ENCODE measurements at regions of chr10 and their contacts with region 1.

Region 1: DNA sequence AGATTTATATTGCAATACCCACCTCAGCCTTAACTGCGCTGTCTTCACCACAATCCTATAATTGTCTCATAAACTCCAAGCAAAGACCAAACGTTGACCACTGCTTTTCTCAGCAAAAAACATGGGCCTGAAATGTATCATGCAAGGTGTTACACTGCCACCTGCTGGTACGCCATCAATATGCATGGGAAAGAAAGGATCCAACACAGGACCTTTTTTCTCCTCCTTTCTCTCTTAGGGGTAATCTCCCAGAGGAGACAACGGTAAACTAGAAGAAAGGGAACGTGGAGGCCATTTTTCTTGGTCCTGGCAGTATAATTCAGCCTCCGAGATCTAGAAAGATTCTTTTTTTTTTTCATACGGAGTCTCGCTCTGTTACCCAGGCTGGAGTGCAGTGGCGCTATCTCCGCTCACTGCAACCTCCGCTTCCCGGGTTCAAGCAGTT is 79.1 kb upstream of the MPP7 start:
- DNase-seq: peak; percentile 89
- H3K4me3 ChIP-seq: no peak overlapping the region
- H3K27ac ChIP-seq: no peak overlapping the region
- H3K4me1 ChIP-seq: peaks cover 0 to 11% (median 6%) of the 10 kb centered on the region in 4 donors
- H3K27me3 ChIP-seq: no peaks in the 10 kb centered on the region
- CTCF ChIP-seq: peak; percentile 91 to 99 (median 98)
- EP300 ChIP-seq: no peak
- POLR2A ChIP-seq: no peak

Region 2: GRCh38 chr10:27558612-27559020 is 823.3 kb before region 1 on chr10:
- in situ Hi-C with region 1: loop called in 1 of 4 experiments (anchors 25 kb)
- intact Hi-C with region 1: no loop called
- DNase-seq: peak; percentile 58
- H3K4me3 ChIP-seq: no peak overlapping the region
- H3K27ac ChIP-seq: no peak overlapping the region
- H3K4me1 ChIP-seq: peaks cover 0 to 2% (median 0%) of the 10 kb centered on the region in 4 donors
- H3K27me3 ChIP-seq: no peaks in the 10 kb centered on the region
- CTCF ChIP-seq: peak; percentile 57 to 78 (median 74)
- EP300 ChIP-seq: no peak
- POLR2A ChIP-seq: no peak

Region 3: DNA sequence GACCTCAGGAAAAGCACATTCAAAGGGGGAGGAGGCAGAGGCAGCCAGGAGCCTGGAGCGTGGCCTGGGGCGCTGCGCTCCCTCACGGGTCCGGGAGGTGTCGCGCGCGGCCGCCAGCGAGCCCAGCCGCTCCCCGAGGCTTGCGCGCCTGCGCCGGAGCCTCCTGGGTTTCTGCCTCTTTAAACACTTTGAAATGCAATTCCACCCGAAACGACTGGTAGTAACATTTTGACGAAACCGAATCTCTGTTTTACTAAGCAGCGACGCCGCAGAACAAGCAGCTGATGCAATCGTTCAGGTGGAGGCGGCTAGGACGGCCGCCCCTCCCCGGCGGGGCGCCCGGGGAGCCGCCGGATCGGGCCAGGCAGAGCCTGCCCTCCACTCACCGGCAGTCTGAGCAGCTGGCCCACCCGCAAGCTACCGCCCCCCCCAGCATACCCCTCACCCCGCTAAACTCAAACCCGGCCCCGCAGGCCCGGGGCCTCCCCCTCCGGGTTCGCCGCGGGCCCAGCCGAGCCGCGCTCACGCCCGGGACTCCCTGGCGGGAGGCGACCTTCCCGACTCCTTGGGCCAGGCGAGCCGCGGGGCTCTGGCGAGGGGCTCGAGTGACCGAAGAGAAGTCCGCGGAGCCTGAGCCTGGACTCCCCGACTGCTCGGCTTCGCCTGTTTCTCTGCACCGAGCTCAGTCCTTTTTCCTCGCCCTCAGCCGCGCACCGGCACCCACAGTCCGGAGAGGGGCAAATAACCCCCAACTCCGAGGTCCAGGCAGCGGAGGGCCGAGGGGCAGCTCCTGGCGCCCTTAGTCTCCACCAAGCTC is 639.5 kb before region 1 on chr10:
- in situ Hi-C with region 1: loop called in 3 of 4 experiments (anchors 25 kb)
- intact Hi-C with region 1: no loop called
- DNase-seq: peak; percentile 81
- H3K4me3 ChIP-seq: peak overlapping the region; percentile 39 to 95 (median 60)
- H3K27ac ChIP-seq: peak overlapping the region; percentile 83 to 87 (median 85)
- H3K4me1 ChIP-seq: peaks cover 0 to 52% (median 43%) of the 10 kb centered on the region in 4 donors
- H3K27me3 ChIP-seq: peaks cover 85% of the 10 kb centered on the region
- CTCF ChIP-seq: peak; percentile 70 to 84 (median 77)
- EP300 ChIP-seq: no peak
- POLR2A ChIP-seq: no peak

Region 4: DNA sequence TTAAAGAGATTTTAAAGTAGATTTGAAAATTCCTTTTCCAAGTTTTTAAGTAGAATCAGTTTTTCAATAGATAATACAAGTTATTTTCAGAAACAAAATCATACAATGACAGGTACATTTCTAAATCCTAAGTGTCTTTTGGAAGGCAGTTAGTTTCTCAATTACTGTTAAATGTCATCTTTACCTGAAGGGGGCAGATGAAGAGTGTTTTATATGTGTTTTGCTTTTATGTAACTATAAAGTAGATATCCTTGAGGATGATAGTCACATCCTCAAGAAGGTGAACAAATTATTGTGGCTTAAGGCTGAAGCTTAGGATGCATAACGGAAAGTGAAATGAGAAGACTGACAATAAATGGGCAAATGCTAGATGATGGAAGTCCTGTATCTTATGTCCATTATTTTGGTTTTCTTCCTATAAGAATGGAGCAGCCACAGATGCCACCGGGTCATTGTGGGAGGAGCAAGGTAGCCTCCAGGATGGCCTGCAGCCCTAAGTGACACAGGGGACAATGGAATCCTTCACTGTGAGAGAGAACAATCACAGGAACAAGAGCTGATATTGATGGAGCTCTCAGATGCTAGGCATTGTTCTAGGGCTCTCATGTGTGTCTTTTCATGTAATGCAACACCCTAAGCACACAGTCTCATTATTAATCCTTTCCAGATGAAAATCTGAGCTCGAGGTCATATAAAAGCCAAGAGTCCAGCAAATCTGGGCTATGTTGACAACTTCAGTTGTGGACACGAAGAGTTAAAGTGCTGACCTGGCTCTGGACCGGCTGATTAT is 622.2 kb before region 1 on chr10:
- in situ Hi-C with region 1: loop called in 1 of 4 experiments (anchors 25 kb)
- intact Hi-C with region 1: no loop called
- DNase-seq: no peak
- H3K4me3 ChIP-seq: no peak overlapping the region
- H3K27ac ChIP-seq: no peak overlapping the region
- H3K4me1 ChIP-seq: no peaks in the 10 kb centered on the region
- H3K27me3 ChIP-seq: peaks cover 11% of the 10 kb centered on the region
- CTCF ChIP-seq: no peak
- EP300 ChIP-seq: no peak
- POLR2A ChIP-seq: no peak

Region 5: GRCh38 chr10:28151636-28152035 is 230.3 kb before region 1 on chr10:
- in situ Hi-C with region 1: no loop called
- intact Hi-C with region 1: no loop called
- DNase-seq: no peak
- H3K4me3 ChIP-seq: no peak overlapping the region
- H3K27ac ChIP-seq: no peak overlapping the region
- H3K4me1 ChIP-seq: no peaks in the 10 kb centered on the region
- H3K27me3 ChIP-seq: no peaks in the 10 kb centered on the region
- CTCF ChIP-seq: no peak
- EP300 ChIP-seq: no peak
- POLR2A ChIP-seq: no peak

Region 6: GRCh38 chr10:28250782-28251181 is 131.1 kb before region 1 on chr10:
- in situ Hi-C with region 1: loop called (anchors 5 to 10 kb)
- intact Hi-C with region 1: loop called (anchors 5 kb)
- DNase-seq: no peak
- H3K4me3 ChIP-seq: no peak overlapping the region
- H3K27ac ChIP-seq: peak overlapping the region in 1 of 4 donors; percentile 32
- H3K4me1 ChIP-seq: peaks cover 0 to 15% (median 0%) of the 10 kb centered on the region in 4 donors
- H3K27me3 ChIP-seq: no peaks in the 10 kb centered on the region
- CTCF ChIP-seq: peak; percentile 52 to 66 (median 59)
- EP300 ChIP-seq: no peak
- POLR2A ChIP-seq: no peak

Region 7: GRCh38 chr10:28256797-28257196 is 125.1 kb before region 1 on chr10:
- in situ Hi-C with region 1: loop called (anchors 5 to 10 kb)
- intact Hi-C with region 1: loop called (anchors 5 kb)
- DNase-seq: no peak
- H3K4me3 ChIP-seq: no peak overlapping the region
- H3K27ac ChIP-seq: no peak overlapping the region
- H3K4me1 ChIP-seq: peaks cover 0 to 12% (median 0%) of the 10 kb centered on the region in 4 donors
- H3K27me3 ChIP-seq: no peaks in the 10 kb centered on the region
- CTCF ChIP-seq: no peak
- EP300 ChIP-seq: no peak
- POLR2A ChIP-seq: no peak

Region 8: GRCh38 chr10:28302638-28303488 is 79.1 kb before region 1 on chr10 and contains the start of gene MPP7:
- in situ Hi-C with region 1: loop called in 1 of 4 experiments (anchors 5 kb)
- intact Hi-C with region 1: loop called (anchors 2 kb)
- DNase-seq: peak; percentile 95
- H3K4me3 ChIP-seq: peak within 1 kb of the TSS; percentile 63 to 98 (median 84)
- H3K27ac ChIP-seq: peak within 1 kb of the TSS; percentile 92 to 97 (median 96)
- H3K4me1 ChIP-seq: peaks cover 0 to 23% (median 15%) of the 10 kb centered on the region in 4 donors
- H3K27me3 ChIP-seq: peaks cover 3% of the 10 kb centered on the region
- CTCF ChIP-seq: peak; percentile 42 to 63 (median 55)
- EP300 ChIP-seq: no peak
- POLR2A ChIP-seq: peak; percentile 85
- total RNA-seq, gene MPP7: 13.1 to 44.8 (median 27.3) TPM

Region 9: DNA sequence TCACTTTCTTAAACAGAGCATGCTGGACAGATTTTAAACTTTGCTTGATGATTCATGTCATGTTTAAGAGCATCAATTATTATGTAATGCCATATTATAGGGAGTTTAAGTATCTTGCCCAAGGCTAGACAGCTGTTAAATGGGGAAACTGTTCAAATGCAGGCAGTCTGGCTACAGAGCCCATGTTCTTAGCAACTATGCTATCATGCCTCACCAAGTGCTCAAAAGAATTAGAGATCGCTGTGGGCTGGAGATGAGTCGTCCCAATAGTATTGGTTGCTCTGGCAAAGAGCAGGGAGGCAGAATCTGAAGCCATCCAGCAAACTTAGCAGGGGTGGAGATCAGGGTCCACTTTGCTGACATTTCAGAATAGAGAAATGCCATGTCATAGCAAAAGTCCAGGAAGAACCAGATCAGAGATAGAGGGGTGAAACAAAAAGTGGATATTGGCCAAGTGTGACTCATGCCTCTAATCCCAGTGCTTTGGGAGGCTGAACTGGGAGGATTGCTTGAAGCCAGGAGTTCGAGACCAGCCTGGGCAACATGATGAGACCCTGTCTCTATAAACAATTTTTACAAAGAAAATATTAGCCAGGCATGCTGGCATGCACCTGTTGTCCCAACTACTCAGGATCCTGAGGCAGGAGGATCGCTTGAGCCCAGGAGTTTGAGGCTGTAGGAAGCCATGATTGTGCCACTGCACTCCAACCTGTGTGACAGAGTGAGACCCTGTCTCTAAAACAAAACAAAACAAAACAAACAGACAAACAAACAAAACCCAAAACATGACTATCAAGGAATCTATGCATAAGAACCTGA is 353.2 kb after region 1 on chr10:
- in situ Hi-C with region 1: no loop called
- intact Hi-C with region 1: no loop called
- DNase-seq: no peak
- H3K4me3 ChIP-seq: no peak overlapping the region
- H3K27ac ChIP-seq: no peak overlapping the region
- H3K4me1 ChIP-seq: no peaks in the 10 kb centered on the region
- H3K27me3 ChIP-seq: no peaks in the 10 kb centered on the region
- CTCF ChIP-seq: no peak
- EP300 ChIP-seq: no peak
- POLR2A ChIP-seq: no peak